H1 (cell line): ENCODE measurements at regions of chr9 and their contacts with region 1.

Region 1: DNA sequence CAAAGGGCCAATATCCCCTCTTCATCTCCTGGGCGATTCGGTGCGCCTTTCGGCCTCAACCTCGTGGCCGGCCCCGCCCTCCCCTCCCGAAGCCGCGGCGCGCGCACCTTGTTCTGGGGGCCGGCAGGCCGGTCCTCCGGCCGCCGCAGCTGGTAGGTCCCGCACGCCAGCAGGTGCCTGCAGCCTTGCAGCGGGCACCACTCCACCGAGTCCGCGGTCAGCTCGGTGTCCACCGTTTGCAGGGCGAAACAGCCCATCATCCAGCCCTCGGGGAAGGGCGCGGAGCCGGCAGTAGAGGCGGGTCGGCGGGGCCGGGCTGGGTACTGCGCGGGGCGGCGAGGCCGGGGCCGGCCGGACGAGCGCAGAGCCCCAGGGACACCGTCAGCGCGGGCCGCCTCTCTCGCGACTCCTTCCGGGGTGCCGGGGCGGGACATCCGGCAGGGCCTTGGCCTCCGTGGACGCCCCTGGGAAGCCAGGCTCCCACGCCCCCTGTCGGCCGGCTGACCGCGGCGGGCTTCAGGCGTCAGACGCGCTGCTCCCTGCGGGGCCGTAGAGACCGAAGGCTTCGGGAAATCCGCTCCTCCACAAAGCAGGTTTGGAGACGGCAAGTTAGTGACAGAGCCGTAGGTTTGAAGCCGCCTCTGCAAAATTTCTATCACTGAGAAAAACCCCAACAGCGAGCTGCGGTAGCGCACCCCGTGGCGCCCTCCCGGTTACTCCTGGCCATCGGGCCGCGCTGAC is at the start of gene DPH7:
- DNase-seq: peak; percentile 78 to 99
- H3K4me3 ChIP-seq: peak within 1 kb of the TSS; percentile 87 to 90 (median 88)
- H3K27ac ChIP-seq: peak within 1 kb of the TSS; percentile 66; the same call in 1 of the 2 replicates
- H3K4me1 ChIP-seq: peaks cover 0 to 23% (median 7%) of the 10 kb centered on the region in 4 experiments; a peak in 6 of 7 replicates
- H3K27me3 ChIP-seq: no peaks in the 10 kb centered on the region
- CTCF ChIP-seq: peak in 2 of 3 experiments; percentile 87 to 92; a peak in 3 of 4 replicates
- EP300 ChIP-seq: 0 out of 3 replicates have a peak, but pooled peaks of 1 of the 2 experiments have one; percentile 37
- POLR2A ChIP-seq: peak in 1 of 2 experiments; percentile 87; a peak in 2 of 3 replicates
- RAD21 ChIP-seq: peak; percentile 26 to 39; a peak in 3 of 4 replicates
- total RNA-seq, gene DPH7: 44.6 and 45.7 TPM in 2 replicates

Region 2: DNA sequence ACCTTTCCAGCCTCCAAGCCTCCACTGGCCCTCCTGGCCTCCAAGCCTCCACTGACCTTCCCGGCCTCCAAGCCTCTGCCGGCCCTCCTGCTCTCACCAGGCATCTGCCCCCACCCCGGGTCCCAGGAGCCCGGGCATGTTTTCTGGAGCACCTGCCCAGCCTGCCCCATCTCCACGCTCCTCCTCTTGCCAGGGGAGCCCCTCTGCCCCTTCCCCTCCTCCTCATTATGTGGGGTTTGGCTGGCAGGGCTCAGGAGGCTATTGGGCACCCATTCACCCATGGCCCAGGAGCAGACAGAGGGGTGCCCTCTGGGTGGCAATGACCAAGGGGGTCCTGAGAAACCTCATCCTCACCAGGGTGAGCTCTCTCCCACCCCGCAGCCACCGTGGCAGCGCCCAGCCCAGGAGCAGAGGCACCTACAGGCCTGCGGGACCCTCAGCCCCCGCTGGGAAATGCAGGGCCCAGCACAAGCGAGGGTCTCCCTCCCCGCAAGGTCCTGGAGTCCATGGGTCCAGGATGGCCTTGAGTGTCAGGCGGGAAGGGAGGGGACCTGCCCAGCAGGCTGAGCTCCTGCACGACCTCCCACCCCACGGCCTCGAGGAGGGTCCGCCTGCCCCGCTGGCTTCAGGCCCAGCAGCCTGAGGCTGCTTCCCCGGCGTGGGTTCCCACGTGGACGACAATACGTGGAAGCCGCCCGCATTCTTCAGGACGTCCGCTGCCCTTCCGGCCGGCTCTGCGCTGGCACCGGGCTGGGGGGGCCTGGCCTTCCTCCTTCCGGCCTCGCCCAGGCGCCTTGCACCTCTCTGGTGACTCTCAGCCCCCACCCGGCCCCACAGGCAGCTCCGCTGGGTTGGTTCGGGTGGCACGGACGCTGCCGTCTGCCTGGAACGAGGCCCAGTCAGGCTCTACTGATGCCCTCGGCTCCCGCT is 225.2 kb before region 1 on chr9:
- CTCF ChIA-PET with region 1: no interaction called
- POLR2A ChIA-PET with region 1: no interaction called
- DNase-seq: no peak
- H3K4me3 ChIP-seq: no peak overlapping the region
- H3K27ac ChIP-seq: no peak overlapping the region
- H3K4me1 ChIP-seq: no peaks in the 10 kb centered on the region
- H3K27me3 ChIP-seq: no peaks in the 10 kb centered on the region
- CTCF ChIP-seq: no peak
- EP300 ChIP-seq: no peak
- POLR2A ChIP-seq: no peak
- RAD21 ChIP-seq: no peak

Region 3: DNA sequence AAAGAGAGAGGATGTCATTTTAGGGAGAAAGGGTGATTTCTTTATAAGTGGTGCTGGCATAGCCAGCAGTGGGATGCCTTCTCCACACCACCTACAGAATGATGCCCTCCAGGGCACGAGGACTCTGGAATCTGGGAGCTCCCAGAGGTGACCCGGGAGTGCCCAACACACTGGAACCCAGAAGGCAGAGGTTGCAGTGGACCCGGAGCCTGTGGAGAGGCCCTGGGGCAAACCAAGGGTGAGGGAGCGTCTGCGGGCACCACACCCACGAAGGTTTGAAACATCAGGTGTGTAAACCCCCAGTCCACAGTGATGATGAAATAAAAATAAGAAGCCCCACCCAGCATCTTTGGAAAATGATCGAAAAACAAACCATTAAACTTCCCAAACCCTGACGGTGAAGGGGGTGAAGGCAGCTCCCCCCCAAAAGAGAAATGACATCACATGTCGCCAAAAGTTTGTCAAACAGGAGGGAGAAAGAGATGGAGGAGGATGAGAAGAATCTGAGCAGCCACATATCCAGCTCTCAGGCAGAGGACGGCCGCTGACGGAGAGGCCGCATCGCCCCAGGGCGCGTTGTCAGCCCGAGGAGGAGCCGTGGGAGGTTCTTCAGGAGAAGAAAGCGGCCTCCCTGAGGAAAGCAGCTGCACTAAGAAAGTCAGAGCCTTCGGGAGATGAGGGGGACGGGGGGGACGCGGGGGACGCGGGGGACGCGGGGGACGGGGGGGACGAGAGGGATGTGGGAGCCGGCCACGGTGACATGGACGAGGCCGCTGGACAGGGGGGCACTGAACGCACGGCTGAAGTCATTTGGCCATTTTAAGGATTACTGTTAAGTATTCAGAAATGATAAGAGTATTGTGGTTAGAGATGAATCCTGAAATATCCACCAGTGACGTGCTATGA is 76.4 kb before region 1 on chr9:
- CTCF ChIA-PET with region 1: no interaction called
- POLR2A ChIA-PET with region 1: no interaction called
- DNase-seq: no peak
- H3K4me3 ChIP-seq: no peak overlapping the region
- H3K27ac ChIP-seq: no peak overlapping the region
- H3K4me1 ChIP-seq: no peaks in the 10 kb centered on the region
- H3K27me3 ChIP-seq: no peaks in the 10 kb centered on the region
- CTCF ChIP-seq: no peak
- EP300 ChIP-seq: no peak
- POLR2A ChIP-seq: no peak
- RAD21 ChIP-seq: no peak

Region 4: GRCh38 chr9:137551651-137552384 is 26.9 kb before region 1 on chr9 and contains the start of gene MRPL41:
- CTCF ChIA-PET with region 1: interaction called, 21 read pairs
- POLR2A ChIA-PET with region 1: interaction called, 16 read pairs
- DNase-seq: peak; percentile 70 to 93
- H3K4me3 ChIP-seq: peak within 1 kb of the TSS; percentile 63 to 79 (median 78)
- H3K27ac ChIP-seq: peak within 1 kb of the TSS; percentile 53; the same call in 1 of the 2 replicates
- H3K4me1 ChIP-seq: peaks cover 0 to 7% (median 1%) of the 10 kb centered on the region in 4 experiments; a peak in 3 of 7 replicates
- H3K27me3 ChIP-seq: no peaks in the 10 kb centered on the region
- CTCF ChIP-seq: no peak
- EP300 ChIP-seq: no peak
- POLR2A ChIP-seq: peak in 1 of 2 experiments; percentile 67; a peak in 2 of 3 replicates
- RAD21 ChIP-seq: no peak
- total RNA-seq, gene MRPL41: 47.2 and 49.4 TPM in 2 replicates

Region 5: DNA sequence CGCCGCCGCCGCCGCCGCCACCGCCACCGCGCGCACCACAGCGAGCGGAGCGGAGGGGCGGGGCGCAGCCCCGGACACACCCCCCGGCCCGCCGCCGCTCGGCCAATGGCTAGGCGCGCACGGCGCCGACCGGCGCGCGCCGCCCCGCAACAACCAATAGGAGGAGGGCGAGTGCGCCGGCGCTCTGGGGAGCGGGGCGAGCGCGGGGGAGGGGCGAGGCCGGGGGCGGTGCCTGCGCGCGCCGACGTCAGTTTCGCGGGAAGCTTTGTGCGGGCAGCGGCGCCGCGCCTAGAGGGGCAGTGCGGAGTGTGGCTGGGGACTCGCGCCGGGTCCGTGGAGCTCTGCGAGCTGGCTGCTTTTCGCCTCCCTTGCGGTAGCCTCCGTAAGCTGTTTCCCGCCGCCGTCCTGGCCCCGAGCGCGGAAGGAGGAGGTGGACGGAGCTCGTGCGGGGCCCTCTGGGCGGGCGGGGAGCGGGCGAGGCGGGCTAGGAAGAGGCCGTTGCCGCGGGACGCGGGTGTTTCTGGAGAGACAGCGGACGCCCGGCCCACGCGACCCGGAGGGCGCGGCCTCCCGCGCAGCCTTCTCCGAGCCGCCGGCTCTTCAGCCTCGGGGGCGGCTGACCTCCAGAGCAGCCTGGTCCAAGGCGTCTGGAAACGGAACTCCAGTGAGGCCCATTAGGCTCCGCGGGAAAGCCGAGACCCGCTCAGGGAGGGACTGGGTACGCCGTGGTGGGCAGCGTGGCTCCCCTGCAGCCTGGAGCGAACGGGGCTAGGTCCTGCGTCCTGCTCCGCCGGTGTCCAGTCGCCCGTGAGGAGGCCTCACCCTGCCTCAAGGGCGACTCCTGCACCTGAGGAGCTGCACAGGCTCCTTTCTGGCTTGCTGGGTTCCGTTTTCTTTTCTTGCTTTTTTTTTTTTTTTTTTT is 12.0 kb after region 1 on chr9 and contains the start of gene ZMYND19:
- CTCF ChIA-PET with region 1: interaction called, 19 read pairs
- POLR2A ChIA-PET with region 1: interaction called, 45 read pairs
- DNase-seq: peak in 1 of 2 experiments; percentile 94
- H3K4me3 ChIP-seq: peak within 1 kb of the TSS; percentile 82 to 96 (median 86)
- H3K27ac ChIP-seq: peak within 1 kb of the TSS; percentile 45; the same call in 1 of the 2 replicates
- H3K4me1 ChIP-seq: peaks cover 0 to 7% (median 5%) of the 10 kb centered on the region in 4 experiments; a peak in 5 of 7 replicates
- H3K27me3 ChIP-seq: no peaks in the 10 kb centered on the region; a peak in 1 of 7 replicates
- CTCF ChIP-seq: no peak
- EP300 ChIP-seq: no peak
- POLR2A ChIP-seq: peak in 1 of 2 experiments; percentile 56; a peak in 2 of 3 replicates
- RAD21 ChIP-seq: no peak
- total RNA-seq, gene ZMYND19: 58.5 and 58.7 TPM in 2 replicates

Region 6: DNA sequence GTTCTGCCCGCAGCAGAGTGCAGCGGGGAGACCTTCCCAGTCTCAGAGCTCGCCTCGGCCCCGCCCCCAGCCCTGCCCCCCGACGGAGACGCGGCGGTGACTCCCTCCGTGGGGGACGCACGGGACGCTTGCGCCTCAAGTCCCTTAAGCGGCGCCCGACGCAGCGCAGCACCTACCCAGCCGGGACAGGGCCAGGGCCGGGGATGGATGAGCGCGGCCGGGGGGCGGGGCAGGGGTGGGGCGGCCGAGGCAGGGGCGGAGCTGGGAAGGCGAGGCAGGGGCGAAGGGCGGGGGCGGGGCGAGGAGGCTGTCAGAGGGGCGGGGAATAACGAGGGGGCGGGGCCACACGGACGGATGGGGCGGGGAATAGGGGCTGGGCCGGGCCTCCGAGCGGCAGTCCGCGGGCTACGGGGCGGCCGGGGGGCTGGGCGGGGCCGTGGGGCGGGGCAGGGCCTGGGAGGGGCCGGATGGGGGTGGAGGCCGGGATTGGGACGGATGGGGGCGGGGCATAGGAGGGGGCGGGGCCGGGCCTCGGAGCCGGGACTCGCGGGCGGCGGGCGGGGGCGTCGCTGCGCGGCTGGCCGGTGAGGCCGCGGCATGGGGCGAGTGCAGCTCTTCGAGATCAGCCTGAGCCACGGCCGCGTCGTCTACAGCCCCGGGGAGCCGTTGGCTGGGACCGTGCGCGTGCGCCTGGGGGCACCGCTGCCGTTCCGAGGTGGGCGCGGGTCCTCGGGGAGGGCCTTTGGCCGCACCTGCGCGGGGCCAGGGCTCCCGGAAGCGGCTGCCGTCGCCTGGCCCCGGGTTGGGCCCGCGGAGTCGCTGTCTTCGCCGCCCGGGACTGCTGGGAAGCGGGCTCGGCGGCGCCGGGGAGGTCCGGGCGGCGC is 26.7 kb after region 1 on chr9 and contains the start of gene ARRDC1:
- CTCF ChIA-PET with region 1: interaction called, 20 read pairs
- POLR2A ChIA-PET with region 1: interaction called, 6 read pairs
- DNase-seq: peak; percentile 86 to 90
- H3K4me3 ChIP-seq: peak within 1 kb of the TSS; percentile 74 to 85 (median 84)
- H3K27ac ChIP-seq: no peak within 1 kb of the TSS; the same call in 1 of the 2 replicates
- H3K4me1 ChIP-seq: peaks cover 0 to 17% (median 8%) of the 10 kb centered on the region in 4 experiments; a peak in 6 of 7 replicates
- H3K27me3 ChIP-seq: peaks cover 0 to 9% (median 2%) of the 10 kb centered on the region in 4 experiments; a peak in 2 of 7 replicates
- CTCF ChIP-seq: no peak
- EP300 ChIP-seq: no peak
- POLR2A ChIP-seq: peak in 1 of 2 experiments; percentile 51; a peak in 2 of 3 replicates
- RAD21 ChIP-seq: no peak
- total RNA-seq, gene ARRDC1: 22.0 and 22.2 TPM in 2 replicates

Region 7: DNA sequence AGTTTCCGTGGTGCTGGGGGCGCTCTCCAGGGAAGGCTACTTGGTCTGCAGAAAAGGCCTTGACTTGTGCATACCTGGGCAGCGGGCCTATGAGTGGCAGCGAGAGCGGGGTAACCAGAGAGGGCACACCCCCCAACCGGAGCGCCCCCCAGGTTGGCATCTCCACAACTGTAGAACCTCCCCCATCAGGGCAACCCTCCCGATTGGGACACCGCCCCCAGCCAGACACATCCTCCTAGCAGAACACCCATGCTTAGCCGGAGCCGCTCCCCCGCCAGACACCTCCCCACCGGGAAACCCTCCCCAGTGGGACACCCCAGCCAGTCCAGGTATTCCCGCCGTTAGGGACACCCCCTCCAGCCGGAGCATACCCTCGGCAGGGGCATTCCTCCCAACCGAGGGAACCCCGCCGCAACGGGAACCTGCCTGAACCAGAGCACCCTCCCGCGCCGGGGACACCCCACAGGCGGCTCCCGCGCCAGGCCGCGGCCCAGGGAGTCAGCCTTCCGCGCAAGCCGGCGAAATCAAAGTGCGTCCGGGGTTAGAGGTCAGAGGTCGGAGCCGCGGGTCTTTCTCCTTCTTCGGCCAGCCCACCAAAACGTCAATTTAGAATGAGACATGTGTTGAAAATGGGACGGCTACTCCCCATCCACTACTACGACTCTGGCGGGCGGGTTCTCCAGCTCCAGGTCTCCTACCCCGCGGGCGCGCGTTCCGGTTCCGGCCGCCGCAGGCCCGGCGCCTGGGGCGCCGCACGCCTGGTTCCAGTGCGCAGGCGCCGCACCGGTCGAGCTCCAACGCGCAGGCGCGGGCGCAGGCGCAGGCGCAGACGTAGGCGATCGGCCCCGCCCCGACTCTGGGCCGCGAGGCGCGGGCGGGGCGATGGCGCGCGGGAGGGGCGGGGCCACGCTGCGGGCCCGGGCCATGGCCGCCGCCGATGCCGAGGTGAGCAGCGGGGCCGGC is 39.7 kb after region 1 on chr9 and contains the start of gene EHMT1:
- CTCF ChIA-PET with region 1: interaction called, 14 read pairs
- POLR2A ChIA-PET with region 1: interaction called, 23 read pairs
- DNase-seq: peak; percentile 46 to 95
- H3K4me3 ChIP-seq: peak within 1 kb of the TSS; percentile 83 to 99 (median 92)
- H3K27ac ChIP-seq: peak within 1 kb of the TSS; percentile 84
- H3K4me1 ChIP-seq: peaks cover 0 to 9% (median 5%) of the 10 kb centered on the region in 4 experiments; a peak in 5 of 7 replicates
- H3K27me3 ChIP-seq: no peaks in the 10 kb centered on the region
- CTCF ChIP-seq: no peak
- EP300 ChIP-seq: no peak
- POLR2A ChIP-seq: no peak; a peak in 2 of 3 replicates
- RAD21 ChIP-seq: no peak
- total RNA-seq, gene EHMT1: 163 and 171 TPM in 2 replicates

Region 8: GRCh38 chr9:137672907-137673791 is 94.5 kb after region 1 on chr9:
- CTCF ChIA-PET with region 1: interaction called, 46 read pairs
- POLR2A ChIA-PET with region 1: interaction called, 4 read pairs
- DNase-seq: no peak
- H3K4me3 ChIP-seq: no peak overlapping the region
- H3K27ac ChIP-seq: no peak overlapping the region
- H3K4me1 ChIP-seq: peaks cover 24 to 46% (median 30%) of the 10 kb centered on the region in 4 experiments
- H3K27me3 ChIP-seq: no peaks in the 10 kb centered on the region
- CTCF ChIP-seq: peak; percentile 30 to 82 (median 79)
- EP300 ChIP-seq: no peak
- POLR2A ChIP-seq: no peak
- RAD21 ChIP-seq: peak; percentile 90 to 91

Region 9: DNA sequence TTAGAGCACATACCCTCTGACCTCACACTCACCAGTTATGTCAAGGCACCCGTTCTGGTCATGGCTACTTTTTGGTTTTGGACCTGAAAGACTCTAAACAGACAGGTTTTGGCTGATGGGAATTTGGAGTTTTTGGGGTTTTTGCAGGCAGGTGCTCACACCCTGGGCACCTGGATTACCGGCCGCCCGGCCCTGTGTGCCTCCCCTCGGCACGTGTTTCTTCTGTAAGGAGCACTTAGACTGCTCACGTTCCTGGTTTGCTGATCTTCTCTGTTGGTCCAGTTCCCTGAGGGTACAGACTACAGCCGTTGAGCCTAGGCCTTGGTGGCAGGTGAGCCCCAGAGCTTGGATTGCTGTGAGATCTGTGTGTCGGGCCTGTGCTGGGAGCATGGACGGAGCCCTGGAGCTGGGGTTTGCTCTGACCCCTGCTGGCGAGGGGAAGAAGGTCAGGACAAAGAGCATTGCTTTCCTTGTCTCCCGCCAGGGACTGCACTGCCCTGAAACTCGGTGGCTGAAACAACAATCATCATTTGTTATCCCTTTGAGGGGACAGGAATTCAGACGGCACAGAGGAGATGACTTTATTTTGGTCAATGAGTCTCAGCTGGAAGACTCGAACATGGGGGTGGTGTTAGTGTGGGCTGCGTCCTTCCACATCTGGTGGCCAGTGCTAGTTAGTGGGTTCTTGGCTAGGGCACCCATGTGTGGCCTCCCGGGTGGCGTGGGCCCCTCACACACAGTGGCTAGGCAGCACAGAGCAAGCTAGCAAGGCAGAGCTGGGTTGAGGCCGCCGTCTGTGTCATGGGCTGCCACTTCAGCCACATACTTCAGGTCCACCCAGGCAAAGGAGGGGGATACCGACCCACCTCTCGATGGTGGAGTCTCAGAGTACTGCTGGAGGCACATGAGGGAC is 116.5 kb after region 1 on chr9:
- CTCF ChIA-PET with region 1: interaction called, 11 read pairs
- POLR2A ChIA-PET with region 1: no interaction called
- DNase-seq: peak; percentile 54 to 86
- H3K4me3 ChIP-seq: no peak overlapping the region
- H3K27ac ChIP-seq: peak overlapping the region; percentile 56; the same call in 1 of the 2 replicates
- H3K4me1 ChIP-seq: peaks cover 8 to 33% (median 17%) of the 10 kb centered on the region in 4 experiments; a peak in 6 of 7 replicates
- H3K27me3 ChIP-seq: no peaks in the 10 kb centered on the region
- CTCF ChIP-seq: peak; percentile 92 to 97 (median 95)
- EP300 ChIP-seq: no peak
- POLR2A ChIP-seq: no peak
- RAD21 ChIP-seq: peak; percentile 78 to 81